CD14-positive monocyte (primary cell): ENCODE measurements at regions of chr7 and their contacts with region 1.

Region 1: GRCh38 chr7:100215895-100216294 is 3.9 kb upstream of the PVRIG start:
- DNase-seq: no peak
- H3K4me3 ChIP-seq: no peak overlapping the region
- H3K4me3 Mint-ChIP-seq: no peak overlapping the region
- H3K27ac ChIP-seq: no peak overlapping the region
- H3K27ac Mint-ChIP-seq: no peak overlapping the region
- H3K4me1 ChIP-seq: no peaks in the 10 kb centered on the region
- H3K4me1 Mint-ChIP-seq: peaks cover 13% of the 10 kb centered on the region
- H3K27me3 ChIP-seq: peaks cover 0 to 3% of the 10 kb centered on the region in 2 donors
- H3K27me3 Mint-ChIP-seq: peaks cover 3 to 8% (median 4%) of the 10 kb centered on the region in 3 donors
- CTCF ChIP-seq: no peak

Region 2: GRCh38 chr7:99374103-99375064 is 841.5 kb before region 1 on chr7 and contains the start of gene ARPC1B:
- intact Hi-C with region 1: no loop called
- DNase-seq: peak; percentile 81 to 84 (median 82)
- H3K4me3 ChIP-seq: peak within 1 kb of the TSS; percentile 82 to 95 (median 89)
- H3K4me3 Mint-ChIP-seq: peak within 1 kb of the TSS; percentile 82 to 89
- H3K27ac ChIP-seq: peak within 1 kb of the TSS; percentile 94
- H3K27ac Mint-ChIP-seq: peak within 1 kb of the TSS; percentile 94 to 100 (median 99)
- H3K4me1 ChIP-seq: peaks cover 46 to 58% of the 10 kb centered on the region in 2 donors
- H3K4me1 Mint-ChIP-seq: peaks cover 50% of the 10 kb centered on the region
- H3K27me3 ChIP-seq: no peaks in the 10 kb centered on the region
- H3K27me3 Mint-ChIP-seq: peaks cover 0 to 2% (median 0%) of the 10 kb centered on the region in 3 donors
- CTCF ChIP-seq: no peak
- polyA plus RNA-seq, gene ARPC1B: 1,179 to 1,362 (median 1,282) TPM

Region 3: DNA sequence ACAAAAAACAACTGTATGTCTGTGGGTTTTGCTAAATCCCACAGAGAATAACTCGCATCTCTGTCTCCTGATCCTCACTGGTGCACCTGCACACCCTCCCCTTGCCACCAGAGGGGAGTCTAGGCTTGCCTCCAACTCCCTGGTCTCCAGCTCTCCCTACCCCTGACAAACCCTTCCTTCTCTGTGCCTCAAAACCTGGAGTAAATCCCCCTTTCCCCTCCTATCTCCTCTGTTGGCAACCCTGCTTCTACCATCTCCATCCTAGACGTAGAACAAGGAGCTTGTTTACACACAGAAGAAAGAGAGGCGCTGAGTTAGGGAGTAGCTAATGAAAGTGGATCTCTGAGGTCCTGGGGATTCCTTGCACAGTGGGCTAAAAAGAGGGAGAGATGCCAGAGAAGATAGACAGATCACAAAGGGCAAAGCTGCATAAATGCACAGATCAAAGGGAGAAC is 83.2 kb before region 1 on chr7:
- intact Hi-C with region 1: loop called (anchors 2 to 5 kb)
- DNase-seq: peak; percentile 58 to 66 (median 65)
- H3K4me3 ChIP-seq: no peak overlapping the region
- H3K4me3 Mint-ChIP-seq: no peak overlapping the region
- H3K27ac ChIP-seq: no peak overlapping the region
- H3K27ac Mint-ChIP-seq: no peak overlapping the region
- H3K4me1 ChIP-seq: peaks cover 9 to 14% of the 10 kb centered on the region in 2 donors
- H3K4me1 Mint-ChIP-seq: peaks cover 16% of the 10 kb centered on the region
- H3K27me3 ChIP-seq: peaks cover 0 to 14% of the 10 kb centered on the region in 2 donors
- H3K27me3 Mint-ChIP-seq: peaks cover 19% of the 10 kb centered on the region in 3 donors
- CTCF ChIP-seq: peak; percentile 95

Region 4: DNA sequence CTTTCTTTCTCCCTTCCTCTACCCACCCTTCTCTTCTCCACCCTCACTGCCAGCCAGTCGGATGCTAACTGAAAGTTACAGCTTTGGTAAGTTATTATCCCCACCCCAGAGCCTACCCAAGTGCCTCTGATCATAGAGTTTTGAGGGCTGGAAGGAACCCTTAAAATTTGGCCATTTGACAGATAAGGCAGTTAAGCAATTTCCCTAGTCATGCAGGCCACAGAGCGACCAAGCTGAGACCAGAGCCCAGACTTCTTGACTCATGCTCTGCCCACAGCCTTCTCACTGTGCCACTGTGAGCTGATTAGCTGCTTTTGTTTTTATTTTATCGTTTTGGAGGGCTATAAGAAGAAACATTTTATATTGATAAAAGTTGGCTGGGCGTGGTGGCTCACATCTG is 340.6 kb after region 1 on chr7:
- intact Hi-C with region 1: no loop called
- DNase-seq: peak; percentile 32 to 66 (median 52)
- H3K4me3 ChIP-seq: no peak overlapping the region
- H3K4me3 Mint-ChIP-seq: no peak overlapping the region
- H3K27ac ChIP-seq: peak overlapping the region in 1 of 2 donors; percentile 58
- H3K27ac Mint-ChIP-seq: peak overlapping the region; percentile 3 to 89 (median 66)
- H3K4me1 ChIP-seq: peaks cover 27 to 34% of the 10 kb centered on the region in 2 donors
- H3K4me1 Mint-ChIP-seq: peaks cover 30% of the 10 kb centered on the region
- H3K27me3 ChIP-seq: no peaks in the 10 kb centered on the region
- H3K27me3 Mint-ChIP-seq: no peaks in the 10 kb centered on the region
- CTCF ChIP-seq: no peak

Region 5: GRCh38 chr7:101538596-101539459 is 1322.9 kb after region 1 on chr7:
- intact Hi-C with region 1: no loop called
- DNase-seq: peak; percentile 10 to 44 (median 23)
- H3K4me3 ChIP-seq: no peak overlapping the region
- H3K4me3 Mint-ChIP-seq: no peak overlapping the region
- H3K27ac ChIP-seq: no peak overlapping the region
- H3K27ac Mint-ChIP-seq: no peak overlapping the region
- H3K4me1 ChIP-seq: no peaks in the 10 kb centered on the region
- H3K4me1 Mint-ChIP-seq: no peaks in the 10 kb centered on the region
- H3K27me3 ChIP-seq: no peaks in the 10 kb centered on the region
- H3K27me3 Mint-ChIP-seq: peaks cover 0 to 7% (median 6%) of the 10 kb centered on the region in 3 donors
- CTCF ChIP-seq: peak; percentile 93